Naive thymus-derived CD4-positive, alpha-beta T cell (primary cell): ENCODE measurements at regions of chr17 and their contacts with region 1.

Region 1: DNA sequence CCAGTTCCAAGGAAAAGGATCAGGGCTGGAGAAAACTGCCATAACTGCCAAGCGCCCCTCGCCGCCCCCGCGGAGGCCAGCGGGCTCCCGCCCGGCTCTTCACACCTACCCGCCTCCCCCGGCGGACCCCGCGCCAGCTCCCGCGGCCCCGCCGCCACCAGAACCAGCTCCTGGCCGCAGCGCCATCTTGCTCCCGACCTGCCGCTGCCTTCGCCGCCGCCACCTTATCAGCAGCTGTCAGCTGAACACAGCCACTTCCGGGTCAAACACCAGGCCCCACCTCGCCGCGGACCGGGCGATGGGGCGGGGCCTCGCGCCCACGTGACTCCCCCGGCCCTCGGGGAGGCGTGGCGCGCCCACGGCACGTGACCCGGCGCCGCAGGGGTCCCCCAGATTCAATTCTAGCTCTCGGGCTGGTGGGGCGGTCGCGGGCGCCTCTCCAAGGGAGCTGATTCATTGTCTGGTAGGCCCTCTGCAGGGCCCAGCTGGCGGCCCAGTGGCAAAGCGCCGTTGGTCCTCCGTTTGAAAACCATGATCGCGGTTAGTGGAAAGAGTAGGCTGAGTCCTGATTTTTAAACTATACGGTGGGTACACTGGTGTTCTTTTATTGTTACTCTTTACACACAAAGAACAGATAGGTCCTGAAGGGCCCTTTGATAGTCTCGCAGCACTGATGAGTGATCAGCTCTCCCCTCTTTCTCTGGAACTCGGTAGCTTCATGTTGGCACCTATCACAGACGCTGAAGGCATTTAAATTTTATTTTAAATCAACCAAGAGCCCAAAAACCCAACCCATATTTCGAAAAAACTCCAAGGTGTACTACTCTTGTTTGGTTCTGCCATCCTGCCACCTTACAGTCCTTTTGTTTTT is at the start of gene SYNRG:
- DNase-seq: peak; percentile 92 to 96 (median 93)
- ATAC-seq: peak; percentile 93
- H3K4me3 ChIP-seq: peak within 1 kb of the TSS; percentile 58
- H3K4me3 Mint-ChIP-seq: peak within 1 kb of the TSS; percentile 74 to 97 (median 88)
- H3K27ac ChIP-seq: peak within 1 kb of the TSS; percentile 91
- H3K27ac Mint-ChIP-seq: peak within 1 kb of the TSS; percentile 82 to 95 (median 92)
- H3K4me1 ChIP-seq: peaks cover 31 to 32% of the 10 kb centered on the region in 2 donors
- H3K4me1 Mint-ChIP-seq: peaks cover 26 to 44% (median 38%) of the 10 kb centered on the region in 7 donors
- H3K27me3 ChIP-seq: no peaks in the 10 kb centered on the region
- H3K27me3 Mint-ChIP-seq: no peaks in the 10 kb centered on the region
- total RNA-seq, gene SYNRG: 85.0 to 146 (median 128) TPM

Region 2: GRCh38 chr17:37358830-37359681 is 250.3 kb before region 1 on chr17:
- CTCF ChIA-PET with region 1: no interaction called
- POLR2A ChIA-PET with region 1: no interaction called
- intact Hi-C with region 1: loop called in 1 of 2 experiments (anchors 1 kb)
- DNase-seq: peak; percentile 81 to 95 (median 85)
- ATAC-seq: peak; percentile 97
- H3K4me3 ChIP-seq: peak overlapping the region; percentile 80
- H3K4me3 Mint-ChIP-seq: peak overlapping the region; percentile 77 to 96 (median 91)
- H3K27ac ChIP-seq: peak overlapping the region; percentile 67
- H3K27ac Mint-ChIP-seq: peak overlapping the region in 7 of 9 donors; percentile 80 to 92 (median 87)
- H3K4me1 ChIP-seq: peaks cover 6 to 14% of the 10 kb centered on the region in 2 donors
- H3K4me1 Mint-ChIP-seq: peaks cover 11 to 28% (median 23%) of the 10 kb centered on the region in 7 donors
- H3K27me3 ChIP-seq: no peaks in the 10 kb centered on the region
- H3K27me3 Mint-ChIP-seq: no peaks in the 10 kb centered on the region

Region 3: DNA sequence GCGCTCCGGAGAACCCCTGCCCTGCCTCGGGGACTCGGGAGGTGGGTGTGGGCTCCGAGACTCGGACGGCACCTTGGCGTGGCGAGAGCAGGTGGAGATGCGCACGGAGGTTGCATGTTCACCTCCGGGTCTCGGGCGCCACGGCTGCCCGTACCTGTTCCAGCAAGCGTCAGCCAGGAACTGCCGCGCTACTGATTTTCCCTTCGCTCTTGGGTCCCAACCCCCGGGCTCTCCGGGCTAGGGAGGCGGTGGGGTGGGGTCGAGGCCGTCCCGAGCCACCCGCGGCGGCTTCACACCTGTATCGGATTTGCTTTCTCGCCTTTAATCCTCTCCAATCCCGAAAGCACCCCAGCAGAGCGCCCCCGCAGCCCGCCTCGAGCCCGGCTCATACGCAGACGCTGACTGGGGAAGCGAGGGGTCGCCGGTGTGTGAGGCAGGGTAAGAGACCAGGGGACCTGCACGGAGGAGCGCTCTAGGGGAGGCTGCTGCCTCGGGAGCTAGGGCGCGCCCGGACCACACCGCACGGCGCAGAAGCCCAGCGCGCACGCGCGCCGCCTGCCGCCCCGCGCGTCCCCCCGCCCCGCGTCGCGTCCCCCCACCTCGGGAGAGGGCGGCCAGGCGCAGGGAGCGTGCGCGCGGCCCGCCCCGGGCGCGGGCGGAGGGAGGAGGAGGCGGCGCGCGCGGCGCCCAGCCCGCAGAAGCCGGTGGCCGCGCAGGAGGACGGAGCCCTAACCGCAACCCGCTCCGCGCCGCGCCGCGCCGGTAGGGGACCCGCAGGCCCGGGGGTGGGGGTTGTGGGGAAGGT is 120.0 kb before region 1 on chr17 and contains the start of gene DUSP14:
- CTCF ChIA-PET with region 1: no interaction called
- POLR2A ChIA-PET with region 1: interaction called, 4 read pairs
- intact Hi-C with region 1: loop called (anchors 1 to 5 kb)
- DNase-seq: peak; percentile 72 to 86 (median 84)
- ATAC-seq: peak; percentile 88
- H3K4me3 ChIP-seq: peak within 1 kb of the TSS; percentile 67
- H3K4me3 Mint-ChIP-seq: peak within 1 kb of the TSS; percentile 91 to 98 (median 95)
- H3K27ac ChIP-seq: peak within 1 kb of the TSS; percentile 79
- H3K27ac Mint-ChIP-seq: peak within 1 kb of the TSS; percentile 81 to 95 (median 88)
- H3K4me1 ChIP-seq: peaks cover 19 to 20% of the 10 kb centered on the region in 2 donors
- H3K4me1 Mint-ChIP-seq: peaks cover 20 to 39% (median 27%) of the 10 kb centered on the region in 7 donors
- H3K27me3 ChIP-seq: no peaks in the 10 kb centered on the region
- H3K27me3 Mint-ChIP-seq: peaks cover 0 to 3% (median 0%) of the 10 kb centered on the region in 5 donors
- total RNA-seq, gene DUSP14: 4.3 to 11.7 (median 8.7) TPM

Region 4: DNA sequence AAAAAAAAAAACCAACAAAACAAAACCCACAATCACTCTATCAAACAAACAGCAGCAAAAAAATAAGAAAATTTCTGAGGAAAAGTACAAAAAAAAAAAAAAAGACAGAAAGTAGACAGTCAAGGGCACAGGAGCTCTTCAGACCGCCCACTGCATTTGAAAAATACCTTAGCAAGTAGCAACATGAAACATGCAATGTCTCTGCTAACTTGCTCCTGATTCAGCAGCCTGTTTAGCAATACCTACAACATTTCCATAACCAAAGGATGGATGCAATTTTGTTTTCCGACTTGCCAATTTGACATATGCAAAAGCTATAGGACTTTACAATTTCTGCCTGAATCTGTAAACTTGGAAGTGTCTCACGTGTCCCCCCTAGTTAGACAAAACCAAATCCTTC is 57.6 kb before region 1 on chr17:
- CTCF ChIA-PET with region 1: interaction called, 3 read pairs
- POLR2A ChIA-PET with region 1: no interaction called
- intact Hi-C with region 1: loop called in 1 of 2 experiments (anchors 10 kb)
- DNase-seq: no peak
- ATAC-seq: no peak
- H3K4me3 ChIP-seq: no peak overlapping the region
- H3K4me3 Mint-ChIP-seq: peak overlapping the region in 7 of 10 donors; percentile 23 to 67 (median 43)
- H3K27ac ChIP-seq: no peak overlapping the region
- H3K27ac Mint-ChIP-seq: peak overlapping the region in 8 of 9 donors; percentile 25 to 84 (median 61)
- H3K4me1 ChIP-seq: peaks cover 14 to 22% of the 10 kb centered on the region in 2 donors
- H3K4me1 Mint-ChIP-seq: peaks cover 28 to 80% (median 66%) of the 10 kb centered on the region in 7 donors
- H3K27me3 ChIP-seq: no peaks in the 10 kb centered on the region
- H3K27me3 Mint-ChIP-seq: no peaks in the 10 kb centered on the region

Region 5: GRCh38 chr17:37592291-37592690 is 17.1 kb before region 1 on chr17:
- CTCF ChIA-PET with region 1: interaction called, 5 read pairs
- POLR2A ChIA-PET with region 1: interaction called, 11 read pairs
- intact Hi-C with region 1: loop called in 1 of 2 experiments (anchors 2 kb)
- DNase-seq: no peak
- ATAC-seq: no peak
- H3K4me3 ChIP-seq: no peak overlapping the region
- H3K4me3 Mint-ChIP-seq: peak overlapping the region in 5 of 10 donors; percentile 3 to 55 (median 6)
- H3K27ac ChIP-seq: no peak overlapping the region
- H3K27ac Mint-ChIP-seq: peak overlapping the region in 3 of 9 donors; percentile 17 to 46 (median 32)
- H3K4me1 ChIP-seq: peaks cover 4 to 6% of the 10 kb centered on the region in 2 donors
- H3K4me1 Mint-ChIP-seq: peaks cover 45 to 86% (median 81%) of the 10 kb centered on the region in 7 donors
- H3K27me3 ChIP-seq: no peaks in the 10 kb centered on the region
- H3K27me3 Mint-ChIP-seq: no peaks in the 10 kb centered on the region